HepG2 (cell line): ENCODE measurements at regions of chr12 and their contacts with region 1.

Region 1: DNA sequence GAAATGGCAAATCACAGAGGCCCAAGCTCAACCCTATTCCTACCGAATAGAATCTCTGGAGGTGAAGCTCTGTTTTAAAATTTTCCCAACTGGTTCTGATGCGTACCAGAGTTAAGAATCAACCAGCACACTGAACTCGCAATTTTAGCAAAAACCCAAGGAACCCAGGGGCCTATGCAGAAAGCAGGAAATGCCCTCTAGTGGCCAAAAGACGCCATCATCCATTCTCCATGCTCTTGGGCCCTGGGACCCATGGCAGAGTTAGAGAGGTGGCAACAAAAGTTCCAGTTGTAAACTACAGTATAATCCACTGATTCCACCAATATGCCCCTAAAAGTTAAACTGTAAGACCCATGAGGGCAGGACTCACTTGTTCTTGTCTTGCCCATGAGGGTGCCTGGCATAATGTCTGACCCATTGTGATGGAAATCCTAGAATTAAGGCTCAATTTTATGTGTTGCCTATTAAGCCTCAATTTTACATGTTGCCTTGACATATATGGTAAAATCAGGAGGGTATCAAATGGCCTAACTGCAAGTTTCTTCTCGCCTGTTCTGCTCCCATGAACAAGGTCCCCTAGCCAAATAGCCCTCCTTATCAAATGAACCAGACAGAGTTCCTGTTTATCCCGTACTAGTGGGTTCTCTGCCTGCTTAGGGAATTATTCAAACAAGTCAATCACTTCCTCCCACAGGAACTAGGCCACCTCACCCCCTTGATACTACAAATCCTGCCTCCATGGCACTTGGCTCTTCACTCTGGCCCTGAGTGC is 137.5 kb upstream of the CPM start:
- DNase-seq: peak; percentile 56
- ATAC-seq: peak; percentile 96
- H3K4me3 ChIP-seq: no peak overlapping the region
- H3K27ac ChIP-seq: no peak overlapping the region
- H3K4me1 ChIP-seq: peaks cover 35% of the 10 kb centered on the region
- H3K27me3 ChIP-seq: no peaks in the 10 kb centered on the region
- CTCF ChIP-seq: peak; percentile 90
- EP300 ChIP-seq: peak in 1 of 2 experiments; percentile 3; a peak in 1 of 4 replicates
- POLR2A ChIP-seq: no peak
- RAD21 ChIP-seq: peak; percentile 83

Region 2: GRCh38 chr12:68865399-68866164 is 204.9 kb before region 1 on chr12:
- CTCF ChIA-PET with region 1: interaction called, 15 read pairs
- POLR2A ChIA-PET with region 1: no interaction called
- in situ Hi-C with region 1: loop called (anchors 5 kb)
- intact Hi-C with region 1: loop called (anchors 1 kb)
- DNase-seq: no peak
- ATAC-seq: no peak
- H3K4me3 ChIP-seq: no peak overlapping the region
- H3K27ac ChIP-seq: no peak overlapping the region
- H3K4me1 ChIP-seq: no peaks in the 10 kb centered on the region
- H3K27me3 ChIP-seq: peaks cover 0 to 2% of the 10 kb centered on the region in 2 experiments; a peak in 1 of 5 replicates
- CTCF ChIP-seq: no peak
- EP300 ChIP-seq: no peak
- POLR2A ChIP-seq: no peak
- RAD21 ChIP-seq: no peak

Region 3: GRCh38 chr12:68871921-68872320 is 198.6 kb before region 1 on chr12:
- CTCF ChIA-PET with region 1: no interaction called
- POLR2A ChIA-PET with region 1: no interaction called
- in situ Hi-C with region 1: loop called (anchors 5 kb)
- intact Hi-C with region 1: loop called (anchors 1 kb)
- DNase-seq: peak; percentile 23
- ATAC-seq: peak; percentile 73
- H3K4me3 ChIP-seq: no peak overlapping the region
- H3K27ac ChIP-seq: no peak overlapping the region
- H3K4me1 ChIP-seq: no peaks in the 10 kb centered on the region
- H3K27me3 ChIP-seq: peaks cover 0 to 2% of the 10 kb centered on the region in 2 experiments; a peak in 1 of 5 replicates
- CTCF ChIP-seq: peak; percentile 52
- EP300 ChIP-seq: no peak
- POLR2A ChIP-seq: no peak
- RAD21 ChIP-seq: no peak

Region 4: DNA sequence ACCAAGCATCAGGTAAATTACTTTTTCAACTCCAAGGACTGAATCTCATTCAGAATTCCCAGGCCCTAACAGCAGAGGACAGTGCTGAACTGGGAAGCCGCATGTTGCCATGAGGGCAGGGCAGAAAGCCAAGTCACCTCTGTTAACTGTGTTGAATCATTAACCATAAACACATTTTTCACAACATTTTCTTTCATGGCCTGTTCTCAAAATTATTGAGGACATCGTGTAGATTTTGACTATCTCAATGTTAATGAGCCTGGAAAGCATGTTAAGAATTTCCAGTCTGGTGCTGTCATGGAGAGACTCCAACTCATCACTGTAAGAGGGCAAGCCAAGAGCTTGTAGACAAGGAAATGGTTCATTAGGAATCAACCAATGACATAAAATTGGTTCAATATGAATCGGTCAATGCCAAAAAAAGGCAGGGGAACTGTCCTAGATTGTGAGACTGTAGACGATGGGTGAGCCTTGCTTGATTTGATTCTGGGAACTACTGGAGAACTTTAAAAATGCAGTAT is 171.2 kb before region 1 on chr12:
- CTCF ChIA-PET with region 1: no interaction called
- POLR2A ChIA-PET with region 1: no interaction called
- in situ Hi-C with region 1: no loop called
- intact Hi-C with region 1: loop called (anchors 1 kb)
- DNase-seq: peak; percentile 46
- ATAC-seq: peak; percentile 77
- H3K4me3 ChIP-seq: no peak overlapping the region
- H3K27ac ChIP-seq: no peak overlapping the region
- H3K4me1 ChIP-seq: peaks cover 49% of the 10 kb centered on the region
- H3K27me3 ChIP-seq: no peaks in the 10 kb centered on the region
- CTCF ChIP-seq: peak; percentile 76
- EP300 ChIP-seq: no peak
- POLR2A ChIP-seq: no peak
- RAD21 ChIP-seq: peak; percentile 75

Region 5: DNA sequence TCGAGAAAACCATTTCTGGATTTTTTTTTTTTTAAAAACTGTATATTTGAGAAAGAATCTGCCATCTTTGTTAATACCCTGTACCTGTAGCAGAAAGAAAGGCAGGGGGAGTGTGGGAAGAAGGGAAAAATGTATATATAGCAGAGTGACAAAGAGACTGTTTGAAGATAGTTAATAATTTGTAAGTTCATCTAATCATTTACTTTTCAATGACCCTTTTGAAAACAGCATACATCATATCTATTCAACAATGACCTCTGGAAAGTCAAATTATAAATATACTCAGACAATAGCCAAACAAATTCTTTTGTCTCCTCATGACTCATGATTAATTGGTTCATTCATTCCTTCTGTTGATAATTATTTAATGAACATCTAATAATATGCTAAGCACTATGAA is 126.7 kb before region 1 on chr12:
- CTCF ChIA-PET with region 1: no interaction called
- POLR2A ChIA-PET with region 1: no interaction called
- in situ Hi-C with region 1: no loop called
- intact Hi-C with region 1: loop called (anchors 10 kb)
- DNase-seq: peak; percentile 22
- ATAC-seq: peak; percentile 79
- H3K4me3 ChIP-seq: no peak overlapping the region
- H3K27ac ChIP-seq: no peak overlapping the region
- H3K4me1 ChIP-seq: peaks cover 25% of the 10 kb centered on the region
- H3K27me3 ChIP-seq: no peaks in the 10 kb centered on the region
- CTCF ChIP-seq: no peak
- EP300 ChIP-seq: no peak
- POLR2A ChIP-seq: no peak
- RAD21 ChIP-seq: no peak